CD4-positive, alpha-beta memory T cell (primary cell): ENCODE measurements at regions of chr3 and their contacts with region 1.

Region 1: DNA sequence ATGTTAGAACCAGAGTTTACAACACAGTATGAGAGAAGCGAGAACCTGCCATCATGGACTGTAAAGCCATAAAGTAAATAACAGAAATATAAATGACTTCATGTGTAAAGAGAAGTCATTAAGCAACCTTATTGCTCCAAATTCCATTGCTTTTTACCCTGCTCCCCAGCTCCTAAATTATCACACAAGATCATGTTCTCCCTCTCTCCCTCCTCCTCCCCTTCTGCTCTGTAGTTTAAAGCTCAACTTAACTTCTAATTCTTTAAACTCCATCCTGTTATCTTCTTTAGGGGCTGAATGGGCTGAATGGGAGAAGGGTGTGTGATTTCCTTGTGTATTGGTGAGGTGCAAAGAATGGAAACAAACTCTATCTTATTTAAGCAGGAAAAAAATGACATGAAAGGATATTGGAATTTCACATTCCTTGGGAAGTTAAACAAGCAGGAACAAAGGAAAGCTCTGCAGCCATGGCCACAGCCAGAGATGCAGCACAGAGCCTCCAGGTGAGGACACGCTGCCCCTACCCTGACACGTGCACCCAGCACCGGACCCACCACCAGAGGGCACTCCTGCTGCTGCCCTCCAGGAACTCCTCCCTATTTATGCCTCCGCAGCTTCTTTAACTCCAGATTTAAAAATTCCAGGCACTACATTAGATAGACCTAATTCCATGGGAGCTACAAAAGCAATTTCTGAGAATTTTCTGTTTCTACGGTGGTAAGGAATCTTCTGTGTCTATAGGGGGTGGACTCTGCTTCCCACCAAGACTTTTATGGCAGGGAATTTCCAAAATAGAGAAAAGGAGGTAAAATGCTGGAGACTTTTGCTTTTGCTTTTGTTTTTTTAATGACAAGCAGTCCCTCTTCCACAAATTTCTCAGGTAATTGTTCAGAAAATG is 76.9 kb upstream of the ABI3BP start:
- DNase-seq: peak; percentile 28 to 57 (median 46)
- H3K4me3 ChIP-seq: no peak overlapping the region
- H3K4me3 Mint-ChIP-seq: peak overlapping the region in 1 of 8 donors; percentile 33
- H3K27ac ChIP-seq: no peak overlapping the region
- H3K27ac Mint-ChIP-seq: no peak overlapping the region
- H3K4me1 ChIP-seq: no peaks in the 10 kb centered on the region
- H3K4me1 Mint-ChIP-seq: peaks cover 0 to 1% (median 0%) of the 10 kb centered on the region in 4 donors
- H3K27me3 ChIP-seq: no peaks in the 10 kb centered on the region
- H3K27me3 Mint-ChIP-seq: peaks cover 0 to 11% of the 10 kb centered on the region in 2 donors

Region 2: GRCh38 chr3:101381809-101382208 is 311.7 kb after region 1 on chr3:
- CTCF ChIA-PET with region 1: interaction called, 3 read pairs
- POLR2A ChIA-PET with region 1: no interaction called
- intact Hi-C with region 1: loop called (anchors 1 kb)
- DNase-seq: peak in 4 of 5 donors; percentile 25 to 40 (median 32)
- H3K4me3 ChIP-seq: no peak overlapping the region
- H3K4me3 Mint-ChIP-seq: no peak overlapping the region
- H3K27ac ChIP-seq: no peak overlapping the region
- H3K27ac Mint-ChIP-seq: peak overlapping the region in 2 of 7 donors; percentile 5 to 57
- H3K4me1 ChIP-seq: peaks cover 21% of the 10 kb centered on the region
- H3K4me1 Mint-ChIP-seq: peaks cover 37 to 66% (median 52%) of the 10 kb centered on the region in 4 donors
- H3K27me3 ChIP-seq: no peaks in the 10 kb centered on the region
- H3K27me3 Mint-ChIP-seq: no peaks in the 10 kb centered on the region